ENCODE measurements at regions of chr6 and their contacts with region 1.

Region 1: DNA sequence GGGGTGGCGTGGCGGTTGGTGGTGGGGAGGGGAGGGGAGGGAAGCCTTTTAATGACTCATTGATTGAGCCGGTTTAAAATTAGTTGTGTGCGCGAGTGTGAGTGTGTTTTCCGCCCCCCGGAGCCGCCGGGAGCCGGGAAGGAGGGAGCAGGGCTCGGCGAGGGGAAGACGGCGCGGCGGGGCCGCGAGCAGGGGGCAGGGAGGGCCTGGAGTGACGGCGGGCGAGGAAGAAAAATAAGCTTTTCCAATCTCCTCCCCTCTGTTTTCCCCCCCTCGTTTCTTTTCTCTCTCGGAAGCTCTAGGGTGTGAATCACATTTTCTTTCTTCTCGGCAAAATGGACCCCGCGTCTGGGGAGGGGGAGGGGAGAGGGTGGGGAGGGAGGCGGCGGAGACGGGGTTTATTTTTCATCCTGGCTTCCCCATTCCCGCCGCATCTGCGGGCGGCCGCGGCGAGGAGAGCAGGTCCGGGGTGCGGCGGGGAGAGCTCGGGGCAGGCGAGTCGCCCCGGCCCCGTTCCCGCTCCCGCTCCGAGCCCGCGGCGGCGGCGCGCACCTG is 847 bp downstream of the BICRAL start:
- DNase-seq: peak; percentile 86 to 94 (median 92)
- ATAC-seq: peak; percentile 85 to 88
- H3K4me3 ChIP-seq: peak overlapping the region; percentile 86
- H3K27ac ChIP-seq: peak overlapping the region; percentile 96
- H3K4me1 ChIP-seq: peaks cover 5% of the 10 kb centered on the region
- H3K27me3 ChIP-seq: no peaks in the 10 kb centered on the region

Region 2: GRCh38 chr6:42511803-42512422 is 270.8 kb before region 1 on chr6:
- intact Hi-C with region 1: no loop called
- DNase-seq: no peak
- ATAC-seq: no peak
- H3K4me3 ChIP-seq: no peak overlapping the region
- H3K27ac ChIP-seq: no peak overlapping the region
- H3K4me1 ChIP-seq: no peaks in the 10 kb centered on the region
- H3K27me3 ChIP-seq: no peaks in the 10 kb centered on the region

Region 3: DNA sequence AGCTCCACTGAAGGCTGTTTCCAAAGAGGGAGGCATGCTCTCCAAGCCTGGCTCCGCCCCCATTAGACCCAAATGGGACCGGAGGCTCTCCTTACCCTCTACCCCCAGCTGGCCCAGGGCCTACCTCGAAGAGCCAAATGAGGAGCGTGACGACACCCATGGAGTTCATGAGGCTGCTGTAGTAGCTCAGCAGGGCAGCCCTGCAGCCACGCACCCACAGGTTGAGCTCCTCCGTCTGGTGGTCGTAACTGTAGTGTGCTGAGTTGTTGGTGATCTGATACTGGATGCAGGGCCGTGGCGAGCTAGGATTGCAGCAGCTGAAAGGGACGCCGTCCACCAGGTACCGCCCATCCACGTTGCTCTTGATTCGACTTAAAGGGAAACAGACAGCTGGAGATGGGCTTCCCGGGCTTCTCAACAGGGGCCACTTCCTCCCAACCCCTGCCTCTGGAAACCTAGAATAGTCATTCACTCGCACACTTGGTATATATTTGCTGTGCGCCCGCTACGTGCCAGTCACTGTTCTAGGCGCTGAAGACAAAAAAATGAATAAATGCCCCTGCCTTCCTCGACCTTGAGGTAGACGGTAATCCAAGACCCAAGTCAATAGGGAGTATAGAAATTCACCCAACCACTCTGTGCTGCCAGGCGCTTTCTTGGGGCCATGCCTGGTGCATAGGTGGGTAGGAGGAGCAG is 78.3 kb before region 1 on chr6:
- intact Hi-C with region 1: no loop called
- DNase-seq: peak; percentile 69 to 84 (median 74)
- ATAC-seq: peak; percentile 68 to 78
- H3K4me3 ChIP-seq: peak overlapping the region; percentile 27
- H3K27ac ChIP-seq: no peak overlapping the region
- H3K4me1 ChIP-seq: no peaks in the 10 kb centered on the region
- H3K27me3 ChIP-seq: no peaks in the 10 kb centered on the region

Region 4: DNA sequence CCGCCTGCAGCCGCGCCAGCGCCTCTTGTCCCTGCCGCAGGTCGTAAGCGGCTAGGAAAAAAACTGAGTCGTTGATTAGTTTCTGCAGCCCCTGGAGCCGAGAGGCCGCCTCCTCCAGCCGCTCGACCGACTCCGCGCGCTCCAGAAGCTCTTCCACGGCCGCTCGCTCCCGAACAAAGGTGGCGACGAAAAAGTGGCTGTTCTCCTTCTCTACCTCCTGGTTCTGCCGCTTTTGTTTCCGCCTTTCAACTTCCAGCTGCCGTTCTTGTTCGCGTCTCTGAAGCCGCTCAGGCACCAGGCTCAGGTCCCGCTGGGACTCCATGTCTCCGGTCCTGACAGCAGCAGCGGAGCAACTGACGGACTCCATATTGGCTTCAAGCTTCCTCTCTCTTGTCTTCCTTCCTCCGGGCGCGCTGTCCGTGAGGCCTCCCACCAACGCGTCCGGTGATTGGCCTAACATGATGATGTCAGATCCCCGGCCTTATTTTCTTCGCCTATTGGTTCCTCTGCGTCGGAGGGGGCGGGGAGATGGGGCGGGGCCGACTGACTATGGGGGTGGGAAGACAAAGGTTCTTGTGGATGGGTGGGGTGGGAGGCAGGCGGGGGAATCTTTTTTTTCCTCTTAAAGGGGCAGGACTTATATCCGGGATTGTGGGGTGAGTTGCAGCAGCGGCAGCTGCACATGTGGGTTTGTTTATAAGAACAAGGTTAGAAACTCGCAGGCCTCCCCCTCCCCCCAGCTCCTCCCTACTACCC is 36.8 kb before region 1 on chr6 and contains the start of gene TBCC:
- intact Hi-C with region 1: loop called in 2 of 4 experiments (anchors 5 kb)
- DNase-seq: peak; percentile 93 to 97 (median 97)
- ATAC-seq: peak; percentile 93 to 95
- H3K4me3 ChIP-seq: peak within 1 kb of the TSS; percentile 78
- H3K27ac ChIP-seq: peak within 1 kb of the TSS; percentile 93
- H3K4me1 ChIP-seq: peaks cover 3% of the 10 kb centered on the region
- H3K27me3 ChIP-seq: no peaks in the 10 kb centered on the region
- total RNA-seq, gene TBCC: 13.9 to 15.3 (median 14.8) TPM